Adrenal gland (tissue), 19 donors: ENCODE measurements at regions of chr10 and their contacts with region 1.

Region 1: DNA sequence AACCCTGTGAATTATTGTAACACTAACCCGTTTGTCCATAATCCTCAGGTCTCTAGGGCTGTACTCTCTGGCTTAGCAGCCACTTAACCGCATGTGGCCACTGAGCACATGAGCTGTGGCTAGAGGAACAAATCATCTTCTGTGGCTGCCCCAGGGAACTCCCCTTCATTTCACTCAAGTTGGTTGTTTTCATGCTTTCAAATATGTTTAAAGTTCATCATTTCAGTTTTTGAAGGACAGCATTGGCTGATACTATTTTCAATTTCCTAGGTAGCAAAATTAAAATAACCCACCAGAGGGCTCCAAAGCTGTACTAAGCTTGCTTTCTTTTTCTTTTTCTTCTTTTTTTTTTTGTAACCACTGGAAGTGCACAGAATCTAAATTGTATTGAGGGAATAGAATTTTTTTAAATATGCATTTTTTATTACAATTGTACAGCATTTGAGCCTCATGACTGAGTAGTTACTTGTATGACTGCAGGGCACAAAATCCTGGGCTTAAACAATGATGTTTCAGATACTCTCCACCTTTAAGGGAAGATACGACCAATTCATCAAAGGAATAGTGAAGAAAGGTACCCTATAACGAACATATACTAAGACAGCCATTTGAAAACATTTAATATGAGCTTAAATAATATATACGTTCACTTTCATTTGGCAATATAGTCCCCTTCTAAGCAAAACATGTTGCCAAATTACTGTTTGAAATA is 38.6 kb downstream of the MRC1 start:
- DNase-seq: no peak
- H3K4me3 ChIP-seq: no peak overlapping the region
- H3K27ac ChIP-seq: no peak overlapping the region
- H3K4me1 ChIP-seq: peaks cover 0 to 16% of the 10 kb centered on the region in 2 donors
- H3K27me3 ChIP-seq: no peaks in the 10 kb centered on the region
- CTCF ChIP-seq: peak in 5 of 6 experiments; percentile 31 to 56 (median 52)
- POLR2A ChIP-seq: no peak

Region 2: DNA sequence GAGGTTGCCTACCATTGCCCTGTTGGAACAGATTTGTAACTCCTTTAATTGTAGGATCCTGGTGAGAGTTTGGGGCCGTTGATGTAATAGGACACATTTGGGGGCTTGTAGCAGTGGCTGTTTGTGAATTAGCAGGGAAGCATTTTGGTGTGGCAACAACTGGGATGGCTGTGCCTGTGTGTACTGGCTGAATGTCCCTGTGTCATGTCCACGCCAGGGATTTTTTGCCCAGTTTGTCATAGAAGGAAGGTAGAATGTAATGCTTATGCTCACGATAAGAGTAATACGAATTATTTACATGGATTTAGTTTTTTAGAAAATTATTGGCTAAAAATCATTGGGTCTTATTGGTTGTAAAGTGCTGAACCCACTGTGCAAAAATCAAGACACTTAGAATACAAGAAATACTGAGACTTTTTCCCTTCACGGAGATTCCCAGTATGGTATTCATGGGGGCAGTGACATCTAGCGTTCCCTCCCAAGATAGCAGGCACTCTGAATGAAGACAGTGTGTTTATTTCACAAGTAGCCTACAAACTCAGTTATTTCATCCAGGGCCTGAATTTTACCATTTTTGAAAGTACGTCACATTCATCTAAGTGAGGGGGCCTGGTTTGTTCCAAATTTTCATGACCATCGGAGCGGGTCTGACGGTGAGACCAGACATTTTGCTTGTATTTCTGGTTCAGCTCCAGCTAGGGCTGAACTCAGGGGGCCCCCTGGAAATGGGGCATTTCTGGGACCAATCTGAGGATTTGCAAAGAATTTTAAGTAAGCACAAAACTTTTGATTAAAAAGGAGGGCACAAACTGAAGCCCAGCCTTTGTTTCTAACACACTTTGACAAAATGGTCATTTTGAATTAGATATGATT is 367.2 kb after region 1 on chr10:
- intact Hi-C with region 1: loop called in 1 of 2 experiments (anchors 10 kb)
- DNase-seq: peak in 6 of 7 donors; percentile 38 to 83 (median 62)
- H3K4me3 ChIP-seq: no peak overlapping the region
- H3K27ac ChIP-seq: no peak overlapping the region
- H3K4me1 ChIP-seq: peaks cover 0 to 7% of the 10 kb centered on the region in 2 donors
- H3K27me3 ChIP-seq: no peaks in the 10 kb centered on the region
- CTCF ChIP-seq: peak; percentile 69 to 86 (median 83)
- POLR2A ChIP-seq: no peak

Region 3: DNA sequence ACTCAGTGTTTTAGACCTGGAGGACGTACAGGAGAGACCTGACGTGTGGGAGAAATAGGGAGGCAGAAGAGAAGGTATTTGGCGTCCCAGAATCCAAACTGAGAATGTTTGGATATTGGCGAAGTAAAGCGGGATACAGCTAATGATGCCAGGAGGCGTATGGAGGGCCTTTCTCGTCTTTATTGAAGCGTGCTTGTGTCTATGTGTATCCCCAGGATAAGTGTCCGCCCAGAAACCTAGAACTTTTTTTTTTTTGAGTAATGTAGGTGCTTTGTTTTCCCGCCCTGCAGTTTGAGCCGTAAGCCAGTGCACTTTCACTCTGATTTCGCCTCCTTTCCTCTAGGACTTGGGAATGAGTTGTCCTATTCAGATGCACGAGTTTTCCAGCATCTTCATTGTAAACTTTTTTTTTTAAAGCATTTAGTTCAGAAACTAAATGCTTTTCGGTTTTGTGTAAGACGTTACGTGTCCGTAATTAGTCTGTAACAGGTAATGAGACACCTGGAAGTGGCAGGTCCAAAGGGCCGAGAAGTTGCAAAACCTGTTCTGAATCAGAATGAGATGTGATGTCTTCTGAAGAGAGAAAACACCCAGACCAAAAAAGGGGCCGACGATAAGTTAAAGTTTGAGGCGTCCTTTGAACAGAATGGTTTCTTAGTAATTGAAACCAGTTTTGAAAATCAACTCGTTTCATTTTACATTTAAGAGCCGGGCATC is 812.2 kb after region 1 on chr10:
- intact Hi-C with region 1: loop called in 1 of 2 experiments (anchors 10 kb)
- DNase-seq: no peak
- H3K4me3 ChIP-seq: peak overlapping the region; percentile 56 to 100 (median 92)
- H3K27ac ChIP-seq: peak overlapping the region; percentile 62 to 99 (median 96)
- H3K4me1 ChIP-seq: peaks cover 16 to 25% of the 10 kb centered on the region in 2 donors
- H3K27me3 ChIP-seq: no peaks in the 10 kb centered on the region
- CTCF ChIP-seq: no peak
- POLR2A ChIP-seq: no peak